ENCODE measurements at regions of chr1 and their contacts with region 1.

Region 1: DNA sequence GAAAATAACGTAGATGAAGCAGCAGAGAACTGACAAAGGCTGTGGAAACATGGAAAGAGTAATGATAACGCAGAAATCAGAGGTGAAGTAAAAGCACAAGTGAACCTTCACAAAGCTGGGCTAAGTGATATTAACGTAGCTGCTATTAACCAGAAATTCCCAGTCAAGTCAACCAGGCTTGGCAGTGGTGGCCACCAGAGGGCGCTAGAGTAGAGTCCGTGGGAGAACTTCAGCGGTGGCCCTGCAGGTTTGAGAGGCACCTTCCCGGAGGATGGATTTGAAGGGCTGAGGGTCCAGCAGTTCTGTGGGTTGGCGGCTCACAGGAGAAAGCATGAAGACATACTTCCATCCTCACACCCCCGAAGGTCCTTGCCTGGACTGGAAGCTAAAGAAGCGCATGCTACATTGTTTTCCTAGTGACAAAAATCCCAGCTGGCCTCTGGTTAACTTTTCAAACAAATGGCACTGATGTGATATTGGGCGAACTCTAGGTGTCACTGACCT is 81.7 kb upstream of the ZNF648 start:
- DNase-seq: peak; percentile 99
- ATAC-seq: peak; percentile 78

Region 2: DNA sequence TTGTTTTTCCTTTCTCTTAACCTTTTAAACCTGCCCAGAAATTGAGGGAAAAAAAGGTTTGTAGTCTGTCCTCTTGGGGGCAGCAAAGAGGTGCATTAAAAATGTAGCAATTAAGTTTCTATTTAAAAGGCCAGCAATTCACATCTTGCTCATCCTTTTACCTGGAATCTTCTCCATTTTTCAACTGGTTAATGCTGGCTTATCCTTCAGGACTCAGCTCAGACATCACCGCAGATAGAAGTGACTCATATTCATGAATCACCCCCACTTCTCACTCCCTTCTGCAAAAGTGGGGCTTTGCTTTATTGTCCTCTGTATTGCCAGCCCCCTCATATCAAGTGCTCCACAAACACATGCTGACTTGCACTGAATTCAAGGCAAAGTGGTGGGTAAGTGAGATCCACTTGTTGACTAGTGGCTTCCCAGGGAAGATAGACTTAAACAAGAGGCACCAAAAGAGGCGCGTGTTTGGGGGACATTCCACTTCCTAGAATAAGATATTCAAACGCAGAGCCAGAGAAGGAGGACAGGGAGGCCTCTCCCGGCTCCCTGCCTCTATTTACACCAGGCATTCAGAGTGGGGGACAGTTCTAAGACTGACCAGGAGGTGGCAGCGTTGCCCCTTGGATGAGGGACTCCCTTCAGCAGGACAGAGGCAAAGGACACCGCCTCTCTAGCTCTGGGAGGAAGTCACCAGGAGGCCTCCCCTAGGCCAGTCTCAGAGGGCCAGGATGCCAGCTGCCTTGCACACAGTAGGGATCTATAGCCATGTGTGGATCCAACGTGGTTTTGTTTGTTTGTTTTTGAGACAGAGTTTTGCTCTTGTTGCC is 58.5 kb before region 1 on chr1:
- intact Hi-C with region 1: loop called (anchors 10 kb)
- DNase-seq: peak; percentile 95
- ATAC-seq: peak; percentile 92

Region 3: DNA sequence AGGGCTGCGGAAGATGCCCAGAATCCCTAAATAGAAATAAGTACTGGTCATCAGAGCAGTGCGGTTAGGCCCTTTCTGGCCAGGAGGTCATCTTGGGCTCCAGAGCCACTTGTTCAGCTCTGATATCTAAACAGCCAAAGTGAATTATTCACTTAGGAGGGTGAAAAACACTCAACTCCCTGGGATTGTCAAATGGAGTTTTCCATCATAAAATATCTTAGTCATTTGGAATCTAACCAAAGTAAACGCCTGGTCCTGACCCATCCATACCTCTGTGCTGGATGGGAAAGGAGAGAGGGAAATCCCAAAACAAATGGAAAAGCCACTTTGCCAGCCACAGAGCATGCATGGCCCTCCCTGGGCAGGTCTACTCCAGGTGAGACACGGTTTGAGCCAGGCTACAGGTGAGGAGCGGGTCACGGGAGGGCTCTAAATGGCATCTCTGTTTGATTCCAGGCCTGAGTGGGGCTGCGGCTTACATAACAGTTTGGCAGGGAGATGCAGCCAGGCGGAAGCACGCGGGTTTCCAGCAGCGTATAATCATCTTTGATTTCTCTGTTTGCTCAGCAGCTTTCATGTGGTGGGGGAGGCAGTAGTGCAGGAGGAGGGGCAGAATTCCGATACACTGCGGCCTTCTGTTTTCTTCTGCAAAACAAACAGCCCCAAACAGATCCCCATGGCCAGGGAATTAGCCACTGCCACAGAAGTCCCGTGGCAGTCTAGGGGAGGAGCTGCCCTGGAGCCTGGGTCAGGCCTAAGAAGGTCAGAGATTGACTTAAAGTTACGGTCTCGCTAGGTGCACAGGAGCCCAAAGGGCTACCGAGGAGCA is 22.6 kb before region 1 on chr1:
- intact Hi-C with region 1: no loop called
- DNase-seq: peak; percentile 84
- ATAC-seq: peak; percentile 96

Region 4: GRCh38 chr1:182301467-182302198 is 158.4 kb after region 1 on chr1:
- intact Hi-C with region 1: loop called (anchors 10 kb)
- DNase-seq: no peak
- ATAC-seq: peak; percentile 78

Region 5: GRCh38 chr1:182391362-182392044 is 248.3 kb after region 1 on chr1 and contains the start of gene GLUL:
- intact Hi-C with region 1: loop called (anchors 5 kb)
- DNase-seq: peak; percentile 97
- ATAC-seq: peak; percentile 85
- total RNA-seq, gene GLUL: 1,285 TPM